Heart left ventricle (tissue), 16 donors: ENCODE measurements at regions of chr7 and their contacts with region 1.

Region 1: GRCh38 chr7:101815835-101816493 is 1.5 kb upstream of the CUX1 start:
- DNase-seq: peak; percentile 76 to 88 (median 84)
- ATAC-seq: peak; percentile 48 to 85 (median 80)
- H3K4me3 ChIP-seq: peak overlapping the region in 11 of 12 donors; percentile 36 to 96 (median 80)
- H3K27ac ChIP-seq: peak overlapping the region; percentile 40 to 86 (median 79)
- H3K4me1 ChIP-seq: peaks cover 0 to 52% (median 27%) of the 10 kb centered on the region in 12 donors
- H3K27me3 ChIP-seq: peaks cover 0 to 5% (median 0%) of the 10 kb centered on the region in 9 donors
- CTCF ChIP-seq: peak in 6 of 12 donors; percentile 12 to 39 (median 29)
- POLR2A ChIP-seq: no peak

Region 2: GRCh38 chr7:101542527-101543241 is 273.3 kb before region 1 on chr7:
- intact Hi-C with region 1: loop called in 1 of 10 experiments (anchors 10 kb)
- DNase-seq: peak; percentile 45 to 68 (median 57)
- ATAC-seq: peak in 3 of 4 donors; percentile 34 to 52 (median 35)
- H3K4me3 ChIP-seq: no peak overlapping the region
- H3K27ac ChIP-seq: no peak overlapping the region
- H3K4me1 ChIP-seq: peaks cover 0 to 9% (median 0%) of the 10 kb centered on the region in 12 donors
- H3K27me3 ChIP-seq: peaks cover 0 to 5% (median 0%) of the 10 kb centered on the region in 9 donors
- CTCF ChIP-seq: peak; percentile 74 to 93 (median 89)
- POLR2A ChIP-seq: no peak

Region 3: DNA sequence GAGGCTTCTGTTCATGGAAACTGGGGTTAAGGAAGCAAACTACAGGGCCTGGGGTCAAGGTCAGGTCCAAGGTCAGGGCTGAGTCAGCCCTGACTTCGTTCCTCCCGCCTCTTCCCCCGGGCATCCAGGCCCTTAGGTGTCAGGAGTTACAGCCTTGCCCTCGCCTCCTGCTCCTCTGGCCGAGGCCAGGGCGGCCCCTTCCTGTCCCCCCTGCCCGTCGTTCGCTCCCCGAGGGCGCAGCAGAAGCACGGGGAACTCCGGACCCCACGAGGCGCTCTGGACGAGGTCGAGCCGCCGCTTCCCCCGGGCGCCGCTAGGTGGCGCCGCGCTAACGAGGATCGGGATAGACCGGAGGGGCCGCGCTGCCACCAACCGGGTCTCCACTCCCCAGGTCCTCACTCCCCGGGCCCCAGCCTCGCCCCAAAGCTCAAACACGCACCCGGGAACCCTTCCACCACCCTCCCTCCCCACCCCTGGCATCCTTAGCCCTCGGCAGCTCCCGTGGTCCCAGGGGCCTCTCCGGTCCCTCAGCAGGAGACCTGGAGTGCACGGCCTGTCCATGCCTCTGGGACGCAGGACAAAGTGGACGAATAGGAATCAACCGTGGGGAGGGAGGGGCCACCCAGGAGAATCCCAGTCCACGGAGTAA is 127.7 kb before region 1 on chr7:
- intact Hi-C with region 1: loop called in 9 of 10 experiments (anchors 1 to 5 kb)
- DNase-seq: peak; percentile 73 to 92 (median 80)
- ATAC-seq: peak; percentile 58 to 91 (median 87)
- H3K4me3 ChIP-seq: peak overlapping the region in 9 of 12 donors; percentile 11 to 34 (median 31)
- H3K27ac ChIP-seq: peak overlapping the region in 1 of 12 donors; percentile 31
- H3K4me1 ChIP-seq: peaks cover 0 to 19% (median 10%) of the 10 kb centered on the region in 12 donors
- H3K27me3 ChIP-seq: no peaks in the 10 kb centered on the region
- CTCF ChIP-seq: peak; percentile 92 to 99 (median 96)
- POLR2A ChIP-seq: no peak

Region 4: GRCh38 chr7:101856473-101857357 is 40.8 kb after region 1 on chr7:
- intact Hi-C with region 1: loop called in 5 of 10 experiments (anchors 2 to 5 kb)
- DNase-seq: peak; percentile 89 to 94 (median 93)
- ATAC-seq: peak; percentile 89 to 96 (median 93)
- H3K4me3 ChIP-seq: peak overlapping the region in 10 of 12 donors; percentile 35 to 59 (median 51)
- H3K27ac ChIP-seq: peak overlapping the region; percentile 78 to 95 (median 87)
- H3K4me1 ChIP-seq: peaks cover 5 to 72% (median 50%) of the 10 kb centered on the region in 12 donors
- H3K27me3 ChIP-seq: no peaks in the 10 kb centered on the region
- CTCF ChIP-seq: peak in 11 of 12 donors; percentile 33 to 61 (median 52)
- POLR2A ChIP-seq: peak in 1 of 2 donors; percentile 33

Region 5: DNA sequence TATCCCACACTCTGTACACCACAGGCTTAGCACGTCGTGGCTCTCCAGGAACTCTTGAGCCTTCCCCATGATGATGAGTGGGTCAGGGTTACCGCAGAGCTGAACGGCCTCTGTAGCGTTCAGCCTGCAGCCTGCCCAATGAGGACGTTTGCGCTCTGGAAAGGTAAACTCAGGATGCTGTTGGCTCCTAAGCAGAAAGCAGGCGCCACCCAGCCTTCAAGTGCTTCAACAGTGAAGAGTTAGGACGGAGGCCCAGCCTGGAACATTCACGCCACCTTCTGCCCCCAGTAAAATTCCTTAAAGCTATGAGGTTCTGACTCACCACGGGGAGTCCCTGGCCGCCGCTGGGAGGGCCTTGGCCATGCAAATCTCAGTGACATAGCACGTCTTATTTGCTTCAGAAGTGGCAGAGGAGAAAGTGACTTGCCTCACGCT is 309.2 kb after region 1 on chr7:
- intact Hi-C with region 1: loop called in 2 of 10 experiments (anchors 10 kb)
- DNase-seq: peak in 4 of 5 donors; percentile 32 to 74 (median 52)
- ATAC-seq: peak; percentile 64 to 94 (median 90)
- H3K4me3 ChIP-seq: no peak overlapping the region
- H3K27ac ChIP-seq: peak overlapping the region in 2 of 12 donors; percentile 26 to 53
- H3K4me1 ChIP-seq: peaks cover 0 to 21% (median 7%) of the 10 kb centered on the region in 12 donors
- H3K27me3 ChIP-seq: no peaks in the 10 kb centered on the region
- CTCF ChIP-seq: peak in 6 of 12 donors; percentile 5 to 43 (median 20)
- POLR2A ChIP-seq: no peak

Region 6: GRCh38 chr7:102236592-102237287 is 420.8 kb after region 1 on chr7:
- intact Hi-C with region 1: loop called in 7 of 10 experiments (anchors 2 to 10 kb)
- DNase-seq: peak in 4 of 5 donors; percentile 45 to 64 (median 58)
- ATAC-seq: peak; percentile 73 to 90 (median 79)
- H3K4me3 ChIP-seq: no peak overlapping the region
- H3K27ac ChIP-seq: no peak overlapping the region
- H3K4me1 ChIP-seq: peaks cover 0 to 11% (median 3%) of the 10 kb centered on the region in 12 donors
- H3K27me3 ChIP-seq: no peaks in the 10 kb centered on the region
- CTCF ChIP-seq: peak; percentile 52 to 90 (median 82)
- POLR2A ChIP-seq: no peak